Activated T-helper 1 cell treated with anti-CD3 and anti-CD28 coated beads, Interleukin-12 subunit alpha, Interleukin-12 subunit beta, Interleukin-2, Interleukin-4 antibody, amounts not matched to agents 30 ng/mL and 10 ng/mL and 1 ng/mL, durations not matched to agents 14 hours and 24 hours and 36 hours (primary cell): ENCODE measurements at regions of chr5 and their contacts with region 1.

Region 1: GRCh38 chr5:10635257-10635866 is 71.5 kb downstream of the ANKRD33B start:
- DNase-seq: peak; percentile 73
- H3K4me3 Mint-ChIP-seq: peak overlapping the region; percentile 69
- H3K27ac Mint-ChIP-seq: peak overlapping the region; percentile 93
- H3K4me1 Mint-ChIP-seq: peaks cover 80% of the 10 kb centered on the region
- H3K27me3 Mint-ChIP-seq: no peaks in the 10 kb centered on the region

Region 2: GRCh38 chr5:10249948-10250803 is 385.2 kb before region 1 on chr5 and contains the start of gene CCT5:
- intact Hi-C with region 1: loop called (anchors 2 kb)
- DNase-seq: peak; percentile 89
- H3K4me3 Mint-ChIP-seq: peak within 1 kb of the TSS; percentile 91
- H3K27ac Mint-ChIP-seq: peak within 1 kb of the TSS; percentile 100
- H3K4me1 Mint-ChIP-seq: peaks cover 53% of the 10 kb centered on the region
- H3K27me3 Mint-ChIP-seq: no peaks in the 10 kb centered on the region
- total RNA-seq, gene CCT5: 511 and 512 TPM in 2 replicates

Region 3: DNA sequence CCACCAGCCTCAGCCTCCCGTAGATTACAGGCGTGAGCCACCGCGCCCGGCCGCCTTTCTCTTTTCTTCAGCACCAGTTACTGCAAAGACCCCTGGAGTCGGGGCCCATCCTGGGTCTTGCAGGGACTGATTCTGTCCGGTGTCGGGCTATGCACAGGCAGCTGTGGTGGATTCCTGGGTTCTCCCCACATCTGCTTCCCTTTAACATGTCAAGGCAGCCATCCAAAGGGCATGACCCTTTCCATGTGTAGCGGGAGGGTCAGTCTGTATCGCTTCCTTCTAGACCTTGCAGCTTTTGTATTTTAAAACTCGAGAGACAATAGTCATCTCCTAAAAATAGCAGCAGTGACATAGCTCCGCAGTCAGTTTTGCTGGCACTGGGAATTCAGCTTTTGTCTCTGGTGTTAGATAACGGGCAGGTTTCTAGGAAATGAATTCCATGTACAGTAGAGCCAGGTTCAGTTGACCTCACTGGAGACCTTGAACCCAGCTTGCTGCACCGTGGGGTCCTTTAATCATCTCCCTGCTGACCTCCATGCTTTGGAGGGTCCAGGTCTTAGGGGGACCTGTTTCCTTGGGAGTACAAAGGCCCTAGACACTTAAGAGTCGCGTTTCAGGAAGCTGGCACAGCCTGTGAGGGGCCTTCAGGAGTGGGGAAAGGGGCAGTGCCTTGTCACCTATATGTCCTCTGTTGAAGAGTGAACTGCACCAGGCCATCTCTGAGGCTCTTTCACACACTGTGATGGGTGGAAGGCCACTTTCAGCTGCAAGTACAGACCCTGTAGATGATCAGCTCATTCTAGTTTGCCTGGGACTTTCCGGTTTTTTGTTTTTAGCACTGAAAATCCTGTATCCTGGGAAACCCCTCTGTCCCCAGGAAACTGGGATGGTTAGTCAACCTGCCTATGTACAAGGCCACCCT is 57.7 kb before region 1 on chr5:
- intact Hi-C with region 1: loop called (anchors 1 kb)
- DNase-seq: no peak
- H3K4me3 Mint-ChIP-seq: no peak overlapping the region
- H3K27ac Mint-ChIP-seq: peak overlapping the region; percentile 79
- H3K4me1 Mint-ChIP-seq: peaks cover 65% of the 10 kb centered on the region
- H3K27me3 Mint-ChIP-seq: no peaks in the 10 kb centered on the region

Region 4: DNA sequence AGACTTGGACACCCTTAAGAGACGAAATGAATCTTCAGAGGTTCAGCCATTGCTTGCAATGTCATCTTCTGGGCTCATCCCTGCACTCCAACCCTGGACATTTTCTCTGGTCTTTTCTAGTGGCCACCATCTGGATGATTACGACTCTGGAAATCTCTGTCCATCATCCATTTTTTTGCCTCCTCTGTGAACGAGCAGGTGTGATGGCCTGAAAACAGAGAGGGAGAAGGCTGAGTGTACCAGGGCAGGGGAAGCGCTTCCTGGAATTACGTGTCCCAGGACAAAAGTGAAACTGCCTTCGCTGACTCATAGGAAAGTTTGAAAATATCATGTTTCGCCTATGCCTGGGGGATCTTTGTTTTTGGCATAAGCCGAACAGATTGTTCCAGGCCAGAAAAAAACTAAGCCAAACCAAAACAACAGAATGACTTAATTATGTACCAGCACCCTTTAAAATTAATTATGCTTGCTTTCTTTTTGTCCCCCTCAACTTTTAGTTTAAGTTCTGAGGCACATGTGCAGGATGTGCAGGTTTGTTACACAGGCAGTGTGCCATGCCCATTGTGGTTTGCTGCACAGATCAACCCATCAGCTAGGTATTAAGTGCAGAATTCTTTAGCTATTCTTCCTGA is 39.6 kb before region 1 on chr5:
- intact Hi-C with region 1: loop called (anchors 1 kb)
- DNase-seq: peak; percentile 54
- H3K4me3 Mint-ChIP-seq: peak overlapping the region; percentile 9
- H3K27ac Mint-ChIP-seq: peak overlapping the region; percentile 44
- H3K4me1 Mint-ChIP-seq: peaks cover 77% of the 10 kb centered on the region
- H3K27me3 Mint-ChIP-seq: peaks cover 4% of the 10 kb centered on the region

Region 5: DNA sequence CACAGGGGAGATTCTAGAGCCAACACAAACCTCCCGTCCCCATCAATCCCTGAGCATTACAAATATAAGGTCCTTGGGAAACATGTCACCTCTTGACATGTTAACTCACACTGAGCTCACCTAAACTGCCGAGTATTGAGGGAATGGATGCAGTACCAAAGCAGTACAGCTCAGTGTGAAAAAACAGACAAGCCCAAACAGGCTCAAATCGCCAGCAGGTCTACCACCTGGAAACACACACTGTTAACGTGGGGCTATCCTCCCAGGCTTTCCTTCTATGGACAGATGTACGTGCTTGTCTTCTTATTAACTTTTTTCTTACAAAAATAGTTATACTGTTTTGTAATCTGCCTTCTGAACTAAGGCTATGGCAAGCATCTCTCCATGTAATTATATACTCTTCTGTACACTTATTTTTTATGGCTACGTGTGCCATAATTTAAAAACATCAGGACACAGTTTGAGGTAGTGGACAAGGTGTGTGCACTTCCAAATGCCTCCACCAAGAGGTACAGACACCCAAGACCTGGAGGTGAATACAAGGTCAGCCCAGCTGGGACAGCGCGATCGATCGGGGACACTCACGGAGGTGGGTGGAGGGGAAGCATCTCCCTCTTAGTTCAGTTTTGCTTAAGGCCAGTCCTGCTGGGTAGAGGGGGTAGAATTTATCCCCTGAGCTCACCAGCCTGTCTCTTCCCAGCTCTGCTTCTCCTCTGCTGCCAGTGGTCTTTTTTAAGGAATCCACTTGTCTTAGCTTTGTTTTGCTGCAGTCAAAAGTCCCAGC is 49.1 kb after region 1 on chr5:
- intact Hi-C with region 1: loop called (anchors 1 kb)
- DNase-seq: no peak
- H3K4me3 Mint-ChIP-seq: no peak overlapping the region
- H3K27ac Mint-ChIP-seq: no peak overlapping the region
- H3K4me1 Mint-ChIP-seq: peaks cover 16% of the 10 kb centered on the region
- H3K27me3 Mint-ChIP-seq: no peaks in the 10 kb centered on the region

Region 6: GRCh38 chr5:10701567-10702039 is 66.2 kb after region 1 on chr5:
- intact Hi-C with region 1: loop called (anchors 5 kb)
- DNase-seq: no peak
- H3K4me3 Mint-ChIP-seq: no peak overlapping the region
- H3K27ac Mint-ChIP-seq: no peak overlapping the region
- H3K4me1 Mint-ChIP-seq: peaks cover 35% of the 10 kb centered on the region
- H3K27me3 Mint-ChIP-seq: no peaks in the 10 kb centered on the region

Region 7: GRCh38 chr5:10719965-10720364 is 84.6 kb after region 1 on chr5:
- intact Hi-C with region 1: no loop called
- DNase-seq: no peak
- H3K4me3 Mint-ChIP-seq: no peak overlapping the region
- H3K27ac Mint-ChIP-seq: no peak overlapping the region
- H3K4me1 Mint-ChIP-seq: no peaks in the 10 kb centered on the region
- H3K27me3 Mint-ChIP-seq: no peaks in the 10 kb centered on the region

Region 8: GRCh38 chr5:10761166-10761932 is 126.0 kb after region 1 on chr5 and contains the start of gene DAP:
- intact Hi-C with region 1: loop called (anchors 1 kb)
- DNase-seq: peak; percentile 91
- H3K4me3 Mint-ChIP-seq: peak within 1 kb of the TSS; percentile 93
- H3K27ac Mint-ChIP-seq: peak within 1 kb of the TSS; percentile 89
- H3K4me1 Mint-ChIP-seq: peaks cover 50% of the 10 kb centered on the region
- H3K27me3 Mint-ChIP-seq: peaks cover 9% of the 10 kb centered on the region
- total RNA-seq, gene DAP: 62.6 and 64.7 TPM in 2 replicates